Activated CD4-positive, alpha-beta T cell treated with anti-CD3 and anti-CD28 coated beads, Interleukin-2, amount 10 ng/mL, durations not matched to agents 7 days and 5 days (primary cell): ENCODE measurements at regions of chr10 and their contacts with region 1.

Region 1: GRCh38 chr10:110481934-110482333 is 15.8 kb upstream of the DUSP5 start:
- DNase-seq: no peak
- H3K4me3 Mint-ChIP-seq: no peak overlapping the region
- H3K27ac Mint-ChIP-seq: no peak overlapping the region
- H3K4me1 Mint-ChIP-seq: no peaks in the 10 kb centered on the region
- H3K27me3 Mint-ChIP-seq: peaks cover 3% of the 10 kb centered on the region

Region 2: DNA sequence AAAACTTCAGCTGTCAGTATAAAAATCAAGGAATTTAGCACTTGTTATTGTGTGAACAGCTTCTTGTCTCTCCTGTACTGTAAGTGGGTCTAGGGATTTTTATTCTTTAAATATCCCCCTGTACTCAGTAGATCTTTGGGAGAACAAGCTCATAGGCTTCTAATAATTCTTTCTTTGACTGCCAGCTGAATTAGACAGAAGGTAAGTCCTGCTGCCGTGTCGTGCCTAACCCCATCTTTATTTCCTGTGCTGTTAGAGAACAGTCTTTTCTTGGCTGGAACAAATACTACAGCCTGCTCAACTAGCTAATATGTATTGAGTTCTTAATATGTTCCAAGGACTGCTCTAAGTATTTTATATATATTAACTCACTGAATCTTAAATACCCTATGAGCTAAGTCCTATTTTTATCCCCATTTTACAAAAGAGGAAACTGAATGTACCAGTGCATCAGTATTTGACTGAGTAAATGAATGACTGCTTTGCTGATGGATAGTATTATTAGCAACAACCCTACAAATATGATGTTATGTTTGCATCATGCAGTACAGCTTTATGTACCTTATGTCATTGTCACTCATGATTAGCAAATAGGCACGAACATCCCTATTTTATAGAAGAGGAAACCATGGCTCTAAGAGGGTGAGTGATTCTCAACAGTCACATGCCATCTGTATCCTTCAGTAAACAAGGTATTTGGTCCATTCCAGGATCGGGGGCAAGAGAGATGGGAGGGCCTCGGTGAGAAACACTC is 10.3 kb after region 1 on chr10:
- CTCF ChIA-PET with region 1: interaction called, 12 read pairs
- POLR2A ChIA-PET with region 1: no interaction called
- DNase-seq: no peak
- H3K4me3 Mint-ChIP-seq: no peak overlapping the region
- H3K27ac Mint-ChIP-seq: no peak overlapping the region
- H3K4me1 Mint-ChIP-seq: peaks cover 25% of the 10 kb centered on the region
- H3K27me3 Mint-ChIP-seq: peaks cover 12% of the 10 kb centered on the region

Region 3: DNA sequence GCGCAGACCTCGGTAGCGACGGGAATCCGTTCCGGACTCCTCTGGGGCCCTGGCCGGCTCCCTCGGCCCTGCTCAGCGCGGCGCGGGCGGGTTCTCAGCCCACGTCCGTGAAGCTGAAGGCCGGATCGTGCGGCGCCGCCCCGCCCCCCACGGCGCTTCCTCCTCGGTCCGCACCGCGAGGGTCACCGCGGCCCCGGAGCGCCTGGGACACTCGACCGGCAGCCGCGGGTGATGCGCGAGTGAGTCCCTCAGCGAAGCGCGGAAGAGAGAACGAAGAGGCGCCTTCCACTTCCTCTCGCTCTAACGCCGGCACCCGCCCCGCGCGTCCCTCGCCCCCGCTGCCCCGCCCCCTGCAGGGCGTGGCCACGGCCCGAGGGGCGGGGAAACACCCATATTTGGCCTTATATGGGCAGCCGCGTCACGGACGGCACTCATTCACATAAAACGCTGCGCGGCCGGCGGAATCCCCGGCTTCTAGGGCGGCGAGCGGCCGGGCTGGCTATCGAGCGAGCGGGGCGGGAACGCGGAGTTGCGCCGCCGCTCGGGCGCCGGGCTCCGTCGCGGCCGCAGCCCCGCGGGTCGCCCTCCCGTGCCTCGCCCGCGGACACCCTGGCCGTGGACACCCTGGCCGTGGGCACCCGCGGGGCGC is 15.6 kb after region 1 on chr10 and contains the start of gene DUSP5:
- CTCF ChIA-PET with region 1: interaction called, 12 read pairs
- POLR2A ChIA-PET with region 1: no interaction called
- DNase-seq: peak; percentile 94
- H3K4me3 Mint-ChIP-seq: peak within 1 kb of the TSS; percentile 89
- H3K27ac Mint-ChIP-seq: peak within 1 kb of the TSS; percentile 89
- H3K4me1 Mint-ChIP-seq: peaks cover 57% of the 10 kb centered on the region
- H3K27me3 Mint-ChIP-seq: no peaks in the 10 kb centered on the region
- total RNA-seq, gene DUSP5: 24.8 to 25.9 TPM

Region 4: GRCh38 chr10:110522365-110522988 is 40.5 kb after region 1 on chr10:
- CTCF ChIA-PET with region 1: no interaction called
- POLR2A ChIA-PET with region 1: no interaction called
- DNase-seq: peak; percentile 37
- H3K4me3 Mint-ChIP-seq: no peak overlapping the region
- H3K27ac Mint-ChIP-seq: no peak overlapping the region
- H3K4me1 Mint-ChIP-seq: peaks cover 24% of the 10 kb centered on the region
- H3K27me3 Mint-ChIP-seq: peaks cover 5% of the 10 kb centered on the region

Region 5: DNA sequence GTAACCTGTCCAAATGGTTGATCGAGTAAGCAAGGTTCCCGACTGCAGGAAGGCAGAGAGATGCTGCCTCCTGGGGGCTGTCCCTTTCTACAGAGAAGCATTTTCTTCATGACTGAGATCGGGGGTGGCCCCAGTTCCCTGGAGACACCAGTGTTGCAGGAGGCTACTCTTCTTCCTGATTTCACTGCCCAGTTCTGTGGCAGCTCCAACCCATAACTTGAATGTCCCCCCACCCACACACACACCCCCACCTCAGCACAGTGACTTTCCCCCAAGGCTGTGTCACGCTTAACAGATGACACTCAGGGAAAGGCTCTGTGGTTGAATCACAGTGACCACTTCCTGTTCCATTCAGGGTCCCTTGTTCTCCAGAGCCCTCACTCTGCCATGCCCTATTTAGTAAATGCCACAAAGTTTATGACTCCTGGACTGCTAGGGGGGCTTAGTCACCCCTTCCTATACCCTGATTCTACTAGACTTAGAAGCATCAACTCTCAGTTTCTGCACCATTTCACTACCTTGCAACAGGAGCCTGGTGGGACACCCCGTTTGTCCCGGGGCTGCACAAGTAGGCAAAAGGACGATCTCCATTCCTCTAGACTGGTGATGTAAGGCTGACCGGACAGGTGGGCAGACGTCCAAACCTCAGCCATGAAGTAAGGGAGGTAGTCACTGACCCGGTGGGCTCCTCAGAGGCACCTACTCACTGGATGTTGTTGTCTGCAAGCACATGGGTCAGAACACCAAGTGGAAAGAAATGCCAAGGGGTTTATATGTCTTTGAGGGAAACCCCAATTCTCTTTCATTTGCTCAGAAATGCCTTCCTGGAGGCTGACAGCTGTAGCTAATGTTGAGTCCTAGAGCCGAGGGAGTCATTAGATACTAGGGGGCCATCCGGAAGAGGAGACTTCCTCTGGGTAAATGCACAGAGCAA is 54.3 kb after region 1 on chr10:
- CTCF ChIA-PET with region 1: no interaction called
- POLR2A ChIA-PET with region 1: no interaction called
- DNase-seq: peak; percentile 65
- H3K4me3 Mint-ChIP-seq: peak overlapping the region; percentile 26
- H3K27ac Mint-ChIP-seq: peak overlapping the region; percentile 47
- H3K4me1 Mint-ChIP-seq: peaks cover 44% of the 10 kb centered on the region
- H3K27me3 Mint-ChIP-seq: peaks cover 3% of the 10 kb centered on the region

Region 6: GRCh38 chr10:110591760-110592159 is 109.8 kb after region 1 on chr10:
- CTCF ChIA-PET with region 1: no interaction called
- POLR2A ChIA-PET with region 1: no interaction called
- DNase-seq: no peak
- H3K4me3 Mint-ChIP-seq: no peak overlapping the region
- H3K27ac Mint-ChIP-seq: no peak overlapping the region
- H3K4me1 Mint-ChIP-seq: no peaks in the 10 kb centered on the region
- H3K27me3 Mint-ChIP-seq: no peaks in the 10 kb centered on the region

Region 7: DNA sequence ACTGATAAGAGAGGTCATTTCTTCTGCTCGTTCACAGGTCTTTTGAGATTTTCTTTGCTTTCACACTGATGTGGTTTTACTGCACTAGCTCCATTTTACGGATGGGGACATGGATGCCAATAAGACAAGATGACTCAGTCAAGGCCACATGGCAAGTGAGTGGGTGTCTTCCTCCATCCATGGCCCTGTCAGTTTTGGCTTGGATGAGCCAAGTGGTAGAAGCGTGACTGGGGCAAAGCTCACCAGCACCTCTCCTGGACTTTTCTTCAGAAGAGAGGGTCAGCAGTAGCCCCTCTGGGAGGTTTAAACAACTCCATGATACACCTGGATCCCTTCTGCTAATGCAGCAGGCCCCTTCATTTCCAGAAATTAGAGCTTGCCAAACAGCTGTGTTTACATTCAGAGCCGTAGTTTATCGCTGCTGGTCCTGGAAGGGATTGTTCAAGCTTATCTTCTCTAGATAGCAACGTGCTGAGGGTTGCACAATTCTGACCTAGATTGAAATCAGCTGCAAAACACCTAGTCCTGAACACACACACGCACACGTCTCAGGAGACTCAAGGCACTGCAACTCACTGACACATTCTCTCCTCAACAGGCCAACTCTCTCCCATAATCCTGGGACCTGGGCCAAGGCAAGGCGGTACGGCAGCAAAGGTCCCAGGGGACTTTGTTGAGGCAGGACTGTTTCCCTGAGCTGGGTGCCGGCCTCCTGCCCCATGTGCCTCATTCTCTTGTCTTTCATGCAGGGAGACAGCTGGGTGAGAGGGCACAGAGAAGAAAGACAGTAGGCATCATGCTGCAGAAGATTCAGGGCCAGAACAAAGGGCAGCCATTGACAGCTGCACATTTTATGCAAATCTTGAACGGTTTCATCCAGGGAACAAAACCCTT is 375.6 kb after region 1 on chr10:
- CTCF ChIA-PET with region 1: no interaction called
- POLR2A ChIA-PET with region 1: no interaction called
- DNase-seq: no peak
- H3K4me3 Mint-ChIP-seq: peak overlapping the region; percentile 4
- H3K27ac Mint-ChIP-seq: peak overlapping the region; percentile 95
- H3K4me1 Mint-ChIP-seq: peaks cover 85% of the 10 kb centered on the region
- H3K27me3 Mint-ChIP-seq: no peaks in the 10 kb centered on the region